Left ventricle myocardium inferior (tissue), 1 donor: ENCODE measurements at regions of chr9 and their contacts with region 1.

Region 1: DNA sequence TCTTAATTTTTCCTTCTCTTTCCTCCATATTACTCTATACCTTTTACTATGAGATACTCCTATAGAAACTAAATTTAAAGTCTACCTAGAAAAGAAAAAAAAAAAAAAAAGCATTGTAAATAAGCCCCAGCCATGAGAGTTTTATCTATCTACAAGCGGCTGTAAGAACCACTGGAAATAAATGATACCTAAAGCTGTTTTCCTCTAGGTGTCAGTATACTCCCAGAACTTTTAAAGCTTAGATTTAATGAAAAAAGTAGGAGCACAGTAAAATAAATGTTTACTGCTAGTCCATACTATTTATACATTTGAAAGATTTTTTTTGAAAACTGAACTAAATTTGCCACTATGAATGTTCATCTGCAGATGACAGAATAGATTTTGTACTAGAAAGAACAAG is 26.2 kb downstream of the TYRP1 start:
- DNase-seq: no peak
- H3K4me3 ChIP-seq: no peak overlapping the region
- H3K27ac ChIP-seq: no peak overlapping the region
- H3K4me1 ChIP-seq: peaks cover 8% of the 10 kb centered on the region
- H3K27me3 ChIP-seq: no peaks in the 10 kb centered on the region
- CTCF ChIP-seq: peak; percentile 66

Region 2: DNA sequence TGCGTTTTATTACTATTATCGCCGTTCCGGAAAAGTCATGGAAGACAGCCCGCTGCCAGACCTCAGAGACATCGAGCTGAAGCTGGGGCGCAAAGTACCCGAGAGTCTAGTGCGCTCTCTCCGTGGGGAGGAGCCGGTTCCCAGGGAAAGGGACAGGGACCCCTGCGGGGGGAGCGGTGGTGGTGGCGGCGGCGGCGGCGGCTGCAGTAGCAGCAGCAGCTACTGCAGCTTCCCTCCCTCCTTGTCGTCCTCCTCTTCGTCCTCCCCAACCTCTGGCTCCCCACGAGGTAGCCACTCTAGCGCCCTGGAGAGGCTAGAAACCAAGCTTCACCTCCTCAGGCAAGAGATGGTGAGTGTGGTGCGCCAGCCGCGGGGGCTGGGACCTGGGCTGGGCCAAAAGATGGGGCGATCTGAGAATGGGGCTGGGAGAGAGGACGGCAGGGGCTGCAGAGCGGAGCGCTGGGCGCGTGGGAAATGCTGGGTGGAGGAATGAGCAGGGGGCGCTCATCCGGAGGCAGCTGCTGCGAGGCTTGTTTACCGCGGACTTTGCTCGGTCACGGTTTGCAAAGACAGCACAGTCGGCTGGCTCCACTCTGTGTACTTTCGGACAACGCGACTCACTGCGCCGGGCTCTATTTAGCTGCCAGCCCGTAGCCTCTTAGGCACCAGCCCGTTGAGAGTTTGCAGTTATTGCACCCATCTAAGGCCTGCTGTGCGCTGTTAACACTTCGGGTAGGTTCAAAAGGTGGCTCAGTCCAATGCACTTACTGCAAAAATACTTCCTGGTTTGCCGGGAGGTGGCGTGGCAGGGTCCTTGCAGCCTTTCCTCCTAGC is 56.5 kb after region 1 on chr9:
- intact Hi-C with region 1: loop called (anchors 10 kb)
- DNase-seq: peak; percentile 42
- H3K4me3 ChIP-seq: peak overlapping the region; percentile 85
- H3K27ac ChIP-seq: peak overlapping the region; percentile 89
- H3K4me1 ChIP-seq: peaks cover 42% of the 10 kb centered on the region
- H3K27me3 ChIP-seq: no peaks in the 10 kb centered on the region
- CTCF ChIP-seq: peak; percentile 65

Region 3: DNA sequence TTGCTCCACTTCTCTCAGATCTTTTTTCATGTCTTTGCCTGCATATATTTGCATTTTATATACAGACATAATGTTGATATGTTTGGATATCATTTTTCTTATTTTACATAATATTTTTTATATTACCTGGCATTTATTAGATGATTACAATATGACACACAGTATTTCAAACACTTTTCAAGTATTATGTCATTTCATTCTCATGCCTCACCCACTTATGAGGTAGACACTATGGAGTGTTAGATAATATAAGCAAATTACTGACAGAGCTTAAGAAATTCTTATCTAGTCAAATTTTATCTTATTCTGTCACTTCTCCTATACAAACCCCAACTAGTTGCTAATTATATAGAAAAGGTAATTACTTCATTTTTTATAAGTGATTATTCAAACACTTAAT is 66.5 kb after region 1 on chr9:
- intact Hi-C with region 1: no loop called
- DNase-seq: no peak
- H3K4me3 ChIP-seq: no peak overlapping the region
- H3K27ac ChIP-seq: no peak overlapping the region
- H3K4me1 ChIP-seq: peaks cover 25% of the 10 kb centered on the region
- H3K27me3 ChIP-seq: no peaks in the 10 kb centered on the region
- CTCF ChIP-seq: no peak

Region 4: DNA sequence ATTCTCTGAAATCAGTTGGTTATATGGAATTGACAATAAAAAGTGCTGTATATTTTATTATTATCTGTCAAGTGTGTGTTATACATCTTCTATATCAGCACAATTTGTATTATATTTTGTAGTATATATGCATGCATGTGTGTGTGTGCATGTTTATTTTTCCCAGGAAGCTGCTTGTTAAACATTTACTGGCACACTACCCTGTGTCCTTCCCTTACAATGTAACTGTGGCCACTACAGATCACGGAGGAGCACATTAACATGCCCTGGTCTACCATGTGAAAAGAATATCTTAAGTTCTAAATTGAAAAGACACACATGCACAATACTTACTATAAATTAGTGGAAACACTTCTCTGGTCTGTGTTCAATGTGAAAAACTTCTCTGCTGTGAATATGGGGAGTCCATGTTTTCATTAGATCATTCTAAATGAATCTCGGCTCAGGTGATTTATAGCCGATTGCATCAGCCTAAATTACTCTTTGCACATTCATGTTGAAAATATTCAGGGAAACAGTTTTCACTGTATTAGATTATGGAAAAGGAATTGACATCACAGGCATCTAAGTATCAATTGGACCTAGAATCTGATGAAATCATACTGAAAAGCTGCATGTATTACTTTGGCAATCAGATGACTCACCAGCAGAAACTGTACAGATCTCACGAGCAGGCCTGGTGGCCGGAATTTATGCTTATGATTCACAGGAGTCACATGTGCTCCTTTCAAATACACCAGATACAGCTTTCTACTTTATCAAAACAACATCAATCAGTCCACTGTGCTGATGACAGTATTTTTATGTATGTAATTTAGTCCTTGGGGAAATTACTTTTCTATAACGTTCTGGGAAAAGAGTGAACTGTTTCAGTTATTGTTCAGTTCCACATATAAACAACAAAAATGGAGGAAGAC is 94.8 kb after region 1 on chr9:
- intact Hi-C with region 1: loop called (anchors 10 kb)
- DNase-seq: no peak
- H3K4me3 ChIP-seq: peak overlapping the region; percentile 38
- H3K27ac ChIP-seq: peak overlapping the region; percentile 65
- H3K4me1 ChIP-seq: peaks cover 42% of the 10 kb centered on the region
- H3K27me3 ChIP-seq: no peaks in the 10 kb centered on the region
- CTCF ChIP-seq: peak; percentile 51

Region 5: GRCh38 chr9:12826924-12827565 is 107.6 kb after region 1 on chr9:
- intact Hi-C with region 1: no loop called
- DNase-seq: no peak
- H3K4me3 ChIP-seq: no peak overlapping the region
- H3K27ac ChIP-seq: no peak overlapping the region
- H3K4me1 ChIP-seq: no peaks in the 10 kb centered on the region
- H3K27me3 ChIP-seq: no peaks in the 10 kb centered on the region
- CTCF ChIP-seq: no peak

Region 6: GRCh38 chr9:12884737-12885414 is 165.4 kb after region 1 on chr9:
- intact Hi-C with region 1: loop called (anchors 5 kb)
- DNase-seq: no peak
- H3K4me3 ChIP-seq: no peak overlapping the region
- H3K27ac ChIP-seq: no peak overlapping the region
- H3K4me1 ChIP-seq: peaks cover 6% of the 10 kb centered on the region
- H3K27me3 ChIP-seq: no peaks in the 10 kb centered on the region
- CTCF ChIP-seq: peak; percentile 66

Region 7: DNA sequence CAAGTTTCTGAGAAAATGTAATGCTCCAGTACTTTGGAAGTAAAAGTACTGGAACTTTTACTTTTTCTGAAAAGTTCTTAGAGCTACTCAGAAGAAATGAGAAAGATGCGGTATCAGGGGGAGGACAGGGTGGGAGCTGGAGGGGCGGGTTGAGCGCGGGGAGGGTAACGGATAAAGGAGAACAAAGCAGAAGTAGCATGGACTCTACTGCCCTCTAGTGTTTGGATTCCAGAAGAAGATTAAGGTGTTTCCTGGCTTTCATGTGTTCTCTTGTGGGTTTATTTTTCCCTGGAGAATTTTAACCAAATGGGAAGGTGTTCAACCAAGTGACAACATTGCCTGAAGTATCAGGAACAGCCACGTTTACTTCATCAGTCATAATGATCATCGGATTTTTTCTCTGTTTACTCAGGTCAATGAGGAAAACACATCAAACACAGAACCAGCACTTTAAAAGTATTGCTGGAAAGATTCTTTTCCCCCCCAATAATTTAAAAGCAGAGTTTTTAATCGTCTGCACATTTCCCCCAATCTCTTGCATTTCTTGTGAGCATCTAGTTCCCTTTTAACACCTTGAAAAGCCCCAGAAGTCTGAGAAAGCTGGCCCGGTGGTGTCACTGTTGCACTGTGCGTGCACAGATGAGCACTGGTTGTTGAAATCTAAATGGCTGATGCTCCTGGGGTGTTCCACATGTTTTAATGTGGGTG is 369.4 kb after region 1 on chr9:
- intact Hi-C with region 1: loop called (anchors 5 kb)
- DNase-seq: no peak
- H3K4me3 ChIP-seq: no peak overlapping the region
- H3K27ac ChIP-seq: no peak overlapping the region
- H3K4me1 ChIP-seq: no peaks in the 10 kb centered on the region
- H3K27me3 ChIP-seq: no peaks in the 10 kb centered on the region
- CTCF ChIP-seq: peak; percentile 84

Region 8: GRCh38 chr9:13095056-13095455 is 375.6 kb after region 1 on chr9:
- intact Hi-C with region 1: loop called (anchors 5 kb)
- DNase-seq: no peak
- H3K4me3 ChIP-seq: no peak overlapping the region
- H3K27ac ChIP-seq: no peak overlapping the region
- H3K4me1 ChIP-seq: no peaks in the 10 kb centered on the region
- H3K27me3 ChIP-seq: no peaks in the 10 kb centered on the region
- CTCF ChIP-seq: no peak